Calu3 (cell line): ENCODE measurements at regions of chrX and their contacts with region 1.

Region 1: GRCh38 chrX:133415276-133416105 is at the start of gene GPC4:
- DNase-seq: peak; percentile 82
- H3K4me3 Mint-ChIP-seq: peak within 1 kb of the TSS; percentile 99
- H3K27ac Mint-ChIP-seq: peak within 1 kb of the TSS; percentile 75
- H3K4me1 Mint-ChIP-seq: no peaks in the 10 kb centered on the region
- H3K27me3 Mint-ChIP-seq: no peaks in the 10 kb centered on the region
- CTCF ChIP-seq: no peak
- total RNA-seq, gene GPC4: 21.8 and 26.2 TPM in 2 replicates

Region 2: GRCh38 chrX:133335027-133335426 is 80.5 kb before region 1 on chrX:
- CTCF ChIA-PET with region 1: interaction called, 6 read pairs
- intact Hi-C with region 1: loop called (anchors 5 kb)
- DNase-seq: peak; percentile 41
- H3K4me3 Mint-ChIP-seq: no peak overlapping the region
- H3K27ac Mint-ChIP-seq: no peak overlapping the region
- H3K4me1 Mint-ChIP-seq: peaks cover 8% of the 10 kb centered on the region
- H3K27me3 Mint-ChIP-seq: no peaks in the 10 kb centered on the region
- CTCF ChIP-seq: peak; percentile 38

Region 3: GRCh38 chrX:133444951-133445831 is 29.7 kb after region 1 on chrX:
- CTCF ChIA-PET with region 1: no interaction called
- intact Hi-C with region 1: loop called (anchors 1 kb)
- DNase-seq: peak; percentile 34
- H3K4me3 Mint-ChIP-seq: peak overlapping the region; percentile 72
- H3K27ac Mint-ChIP-seq: peak overlapping the region; percentile 34
- H3K4me1 Mint-ChIP-seq: no peaks in the 10 kb centered on the region
- H3K27me3 Mint-ChIP-seq: no peaks in the 10 kb centered on the region
- CTCF ChIP-seq: no peak

Region 4: DNA sequence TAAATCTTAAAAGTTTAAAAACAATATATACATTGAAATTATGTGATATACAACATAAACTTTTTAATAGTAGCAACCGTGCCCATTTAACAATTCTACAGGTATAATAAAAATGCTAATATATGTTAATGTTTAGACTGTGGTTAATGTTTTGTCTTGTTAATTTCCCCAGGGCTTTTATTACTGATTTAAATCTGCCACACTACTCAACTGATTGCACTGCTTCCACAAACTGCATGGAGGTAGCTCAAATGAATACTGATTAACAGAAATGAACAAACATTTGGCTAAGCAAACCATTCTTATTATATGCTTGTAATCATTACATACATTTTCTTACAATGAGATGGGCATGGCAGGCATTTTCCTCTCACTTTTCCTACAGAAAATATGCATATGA is 294.0 kb after region 1 on chrX:
- CTCF ChIA-PET with region 1: no interaction called
- intact Hi-C with region 1: no loop called
- DNase-seq: no peak
- H3K4me3 Mint-ChIP-seq: no peak overlapping the region
- H3K27ac Mint-ChIP-seq: peak overlapping the region; percentile 62
- H3K4me1 Mint-ChIP-seq: peaks cover 48% of the 10 kb centered on the region
- H3K27me3 Mint-ChIP-seq: no peaks in the 10 kb centered on the region
- CTCF ChIP-seq: no peak